GM10248 (cell line): ENCODE measurements at regions of chr11 and their contacts with region 1.

Region 1: DNA sequence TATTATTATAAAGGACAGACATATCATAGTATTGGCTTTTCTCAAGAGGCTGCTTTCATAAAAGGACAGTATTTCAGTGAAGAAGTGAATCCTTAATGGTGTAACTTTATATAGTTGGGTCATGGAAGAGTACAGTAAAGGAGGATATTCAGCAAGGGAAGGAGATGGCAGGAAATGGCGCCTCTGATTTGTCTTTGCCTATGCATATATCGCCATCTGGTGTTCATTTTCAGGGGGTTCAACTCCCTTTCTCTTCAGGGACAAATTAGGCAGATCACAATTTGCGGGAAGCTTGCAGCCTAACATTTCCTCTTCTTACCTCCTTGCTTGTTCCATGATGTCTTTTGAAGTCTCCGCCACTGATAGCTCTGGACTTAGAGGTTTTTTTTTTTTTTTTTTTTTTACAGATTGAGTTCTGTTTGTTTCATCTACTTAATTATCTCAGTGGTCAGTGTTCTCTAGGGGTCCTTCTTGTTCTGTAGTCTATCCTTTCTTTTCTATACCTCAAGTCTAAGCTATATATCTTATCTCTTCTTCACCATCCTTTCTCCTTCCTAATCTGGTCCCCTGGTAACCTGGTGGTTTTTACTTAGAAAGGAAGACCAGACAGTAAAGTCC is 21.8 kb upstream of the RRM1 start:
- DNase-seq: peak; percentile 62
- CTCF ChIP-seq: peak; percentile 75

Region 2: GRCh38 chr11:3353066-3353465 is 719.7 kb before region 1 on chr11:
- CTCF ChIA-PET with region 1: no interaction called
- POLR2A ChIA-PET with region 1: no interaction called
- DNase-seq: no peak
- CTCF ChIP-seq: no peak

Region 3: GRCh38 chr11:3816668-3817067 is 256.1 kb before region 1 on chr11:
- CTCF ChIA-PET with region 1: interaction called, 29 read pairs
- POLR2A ChIA-PET with region 1: no interaction called
- DNase-seq: no peak
- CTCF ChIP-seq: no peak

Region 4: DNA sequence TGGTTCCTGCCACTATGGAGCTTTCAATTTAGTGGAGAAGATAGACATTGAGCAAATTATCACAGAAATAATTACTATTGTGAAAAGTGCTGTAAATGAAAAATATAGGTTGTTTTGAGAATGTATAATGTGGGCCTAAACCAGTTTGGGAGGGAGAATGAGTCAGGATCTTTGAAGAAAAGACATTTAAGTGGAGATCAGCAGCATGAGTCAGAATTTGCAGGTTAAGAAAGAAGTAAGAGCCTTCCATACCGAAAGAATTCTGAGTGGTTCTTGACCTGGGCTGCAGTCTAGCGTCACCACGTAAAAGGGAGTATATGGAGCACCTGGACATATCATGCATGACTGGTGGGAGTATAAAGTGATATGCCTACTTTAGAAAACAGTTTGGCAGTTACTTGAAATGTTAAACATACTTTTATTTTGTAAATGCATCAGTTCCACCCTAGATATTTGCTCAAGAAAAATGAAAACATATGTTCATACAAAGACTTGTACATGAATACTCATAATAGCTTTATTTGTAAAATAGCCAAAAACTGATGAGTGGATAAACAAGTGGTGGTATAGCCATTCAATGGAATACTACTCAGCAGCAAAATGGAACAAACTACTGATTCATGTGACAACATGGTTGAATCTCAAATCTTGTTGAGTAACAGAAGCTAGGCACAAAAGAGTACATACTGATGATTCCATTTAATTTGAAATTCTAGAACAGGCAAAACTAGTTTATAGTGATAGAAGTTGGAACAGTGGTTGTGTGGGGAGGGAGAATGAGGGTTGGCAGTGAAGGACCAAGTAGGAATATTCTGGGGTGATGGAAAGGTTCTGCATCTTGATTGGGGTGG is 118.1 kb before region 1 on chr11:
- CTCF ChIA-PET with region 1: no interaction called
- POLR2A ChIA-PET with region 1: no interaction called
- DNase-seq: no peak
- CTCF ChIP-seq: no peak

Region 5: GRCh38 chr11:4018666-4019065 is 54.1 kb before region 1 on chr11:
- CTCF ChIA-PET with region 1: no interaction called
- POLR2A ChIA-PET with region 1: no interaction called
- DNase-seq: no peak
- CTCF ChIP-seq: no peak

Region 6: DNA sequence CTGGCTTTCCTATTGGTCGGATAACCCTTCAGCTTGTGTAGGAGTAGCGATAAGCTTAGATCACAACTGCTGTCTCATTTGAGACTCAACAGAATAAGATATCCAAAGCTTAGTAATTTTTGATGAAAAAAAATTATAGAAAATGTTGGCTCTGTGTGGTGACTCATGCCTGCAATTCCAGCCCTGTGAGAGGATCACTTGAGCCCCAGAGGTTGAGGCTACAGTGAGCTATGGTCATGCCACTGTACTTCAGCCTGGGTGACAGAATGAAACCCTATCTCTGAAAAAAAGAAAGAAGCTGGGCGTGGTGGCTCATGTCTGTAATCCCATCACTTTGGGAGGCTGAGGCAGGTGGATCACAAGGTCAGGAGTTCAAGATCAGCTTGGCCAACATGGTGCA is 33.8 kb before region 1 on chr11:
- CTCF ChIA-PET with region 1: interaction called, 13 read pairs
- POLR2A ChIA-PET with region 1: no interaction called
- DNase-seq: no peak
- CTCF ChIP-seq: no peak

Region 7: DNA sequence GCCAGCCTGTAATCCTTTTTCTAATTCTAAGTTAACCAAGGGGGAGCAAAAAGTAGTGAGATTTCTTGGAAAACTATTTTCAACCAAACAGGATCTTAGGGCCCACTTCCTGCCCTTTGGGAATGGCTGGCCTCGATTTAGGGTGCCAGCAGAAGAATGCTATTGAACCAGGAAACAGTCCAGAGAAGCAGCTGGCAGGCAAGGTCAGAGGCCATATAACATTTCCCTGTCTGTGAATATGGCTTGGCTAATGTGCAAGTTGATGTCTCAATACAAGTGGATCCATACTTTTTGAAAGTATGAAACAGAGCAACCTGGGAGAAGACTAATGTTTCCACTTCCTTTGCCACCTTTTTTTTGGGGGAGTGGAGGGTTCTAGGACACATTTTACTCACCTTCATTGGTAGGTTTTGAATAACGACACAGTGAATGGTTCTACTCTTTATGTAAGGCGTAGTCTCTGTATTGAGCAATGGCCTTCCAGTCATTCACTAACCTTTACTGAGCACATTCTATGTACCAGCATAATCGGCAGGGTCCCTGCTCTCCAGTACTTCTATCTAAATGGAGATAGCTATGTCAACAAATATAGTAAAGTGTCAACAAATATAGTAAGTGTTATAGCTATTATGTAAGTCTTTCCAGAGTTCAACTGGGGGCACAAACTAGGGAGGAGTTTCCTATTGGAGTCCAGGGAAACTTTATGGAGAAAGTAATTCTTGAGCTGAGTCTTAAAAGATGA is 12.4 kb before region 1 on chr11:
- CTCF ChIA-PET with region 1: interaction called, 109 read pairs
- POLR2A ChIA-PET with region 1: no interaction called
- DNase-seq: no peak
- CTCF ChIP-seq: no peak

Region 8: DNA sequence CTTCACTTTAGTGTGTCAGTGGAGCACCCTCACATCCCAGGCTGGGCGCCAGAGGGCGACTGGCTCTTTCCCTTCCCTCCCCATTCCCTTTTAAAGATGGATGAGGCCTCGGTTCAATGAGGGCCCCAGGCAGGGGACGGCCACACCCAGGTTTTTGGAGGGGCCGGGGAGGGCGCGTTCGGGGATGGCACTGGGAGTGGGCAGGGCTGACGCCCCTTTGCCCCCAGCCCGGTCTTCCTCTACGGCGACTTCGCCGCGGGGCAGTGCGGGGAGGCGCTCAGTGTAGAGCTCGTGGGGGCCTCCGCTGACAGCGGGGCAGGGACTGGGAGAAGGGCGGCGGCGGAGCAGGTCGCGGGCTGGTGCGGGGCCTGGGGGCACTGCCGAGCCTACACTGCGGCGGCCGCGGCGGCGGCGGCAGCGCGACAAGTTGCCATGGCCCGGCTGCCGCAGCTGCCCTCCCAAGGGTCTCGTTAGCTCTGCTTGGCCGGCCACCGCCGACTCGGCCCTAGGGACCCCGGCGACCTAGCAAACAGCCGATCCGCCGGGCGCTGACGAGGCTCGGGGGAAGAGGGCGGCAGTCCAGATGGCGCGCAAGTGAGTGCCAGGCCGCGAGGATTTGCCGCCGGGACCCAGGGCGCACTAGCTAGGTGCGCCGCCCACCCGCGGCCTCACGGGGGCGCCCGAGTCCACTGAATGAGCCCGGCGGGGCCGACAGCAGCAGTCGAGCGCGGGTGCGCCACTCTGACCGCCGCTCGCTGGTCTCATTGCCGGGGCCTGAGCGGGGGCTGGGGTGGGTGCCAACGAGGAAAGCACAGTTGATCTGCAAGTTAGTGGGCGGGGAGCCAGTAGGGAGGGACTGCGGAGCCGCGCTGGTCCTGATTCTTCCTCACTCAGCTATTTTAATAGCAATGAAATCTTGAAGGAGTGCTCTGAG is 114.5 kb after region 1 on chr11:
- CTCF ChIA-PET with region 1: no interaction called
- POLR2A ChIA-PET with region 1: no interaction called
- DNase-seq: peak; percentile 91
- CTCF ChIP-seq: peak; percentile 94